Common myeloid progenitor, CD34-positive (primary cell): ENCODE measurements at regions of chr7 and their contacts with region 1.

Region 1: DNA sequence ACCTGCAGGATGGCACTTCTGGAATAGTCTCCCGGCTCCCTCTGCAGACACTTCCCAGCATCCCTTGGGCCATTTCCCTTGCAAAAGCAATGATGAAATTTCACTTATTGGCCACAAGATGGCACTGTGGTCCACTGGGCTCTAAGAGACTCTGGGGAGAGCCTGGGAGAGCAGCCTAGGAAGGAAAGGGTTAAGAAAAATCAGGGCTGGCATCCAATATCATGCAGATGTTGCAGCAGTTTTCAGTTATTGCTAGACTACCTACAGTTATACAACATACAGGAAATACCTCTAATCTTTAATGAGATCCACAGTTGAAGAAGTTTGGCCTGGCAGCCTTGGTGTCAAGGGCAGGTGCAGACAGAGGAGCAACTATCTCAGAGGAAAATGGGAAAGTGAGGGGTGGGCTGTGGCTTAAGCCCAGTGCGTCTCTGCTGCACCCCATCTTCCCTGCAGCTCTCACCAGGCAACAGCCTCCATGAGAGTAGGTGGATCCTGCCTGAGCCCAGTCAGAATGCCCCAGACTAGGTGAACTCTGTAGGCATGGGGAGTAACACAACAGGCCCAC is 100.2 kb upstream of the PRSS58 start:
- DNase-seq: peak; percentile 77 to 92 (median 92)
- H3K4me3 ChIP-seq: no peak overlapping the region
- H3K27ac ChIP-seq: no peak overlapping the region
- H3K4me1 ChIP-seq: peaks cover 5 to 36% (median 22%) of the 10 kb centered on the region in 4 experiments
- H3K27me3 ChIP-seq: no peaks in the 10 kb centered on the region

Region 2: GRCh38 chr7:142231716-142232115 is 126.3 kb before region 1 on chr7:
- CTCF ChIA-PET with region 1: no interaction called
- POLR2A ChIA-PET with region 1: no interaction called
- DNase-seq: peak; percentile 11 to 42 (median 36)
- H3K4me3 ChIP-seq: no peak overlapping the region
- H3K27ac ChIP-seq: no peak overlapping the region
- H3K4me1 ChIP-seq: no peaks in the 10 kb centered on the region
- H3K27me3 ChIP-seq: peaks cover 0 to 2% (median 0%) of the 10 kb centered on the region in 5 experiments

Region 3: GRCh38 chr7:142345811-142346210 is 12.2 kb before region 1 on chr7:
- CTCF ChIA-PET with region 1: interaction called, 45 read pairs
- POLR2A ChIA-PET with region 1: no interaction called
- DNase-seq: peak; percentile 50 to 86 (median 78)
- H3K4me3 ChIP-seq: peak overlapping the region in 2 of 7 experiments; percentile 3 to 27
- H3K27ac ChIP-seq: no peak overlapping the region
- H3K4me1 ChIP-seq: peaks cover 0 to 29% (median 21%) of the 10 kb centered on the region in 4 experiments
- H3K27me3 ChIP-seq: no peaks in the 10 kb centered on the region

Region 4: DNA sequence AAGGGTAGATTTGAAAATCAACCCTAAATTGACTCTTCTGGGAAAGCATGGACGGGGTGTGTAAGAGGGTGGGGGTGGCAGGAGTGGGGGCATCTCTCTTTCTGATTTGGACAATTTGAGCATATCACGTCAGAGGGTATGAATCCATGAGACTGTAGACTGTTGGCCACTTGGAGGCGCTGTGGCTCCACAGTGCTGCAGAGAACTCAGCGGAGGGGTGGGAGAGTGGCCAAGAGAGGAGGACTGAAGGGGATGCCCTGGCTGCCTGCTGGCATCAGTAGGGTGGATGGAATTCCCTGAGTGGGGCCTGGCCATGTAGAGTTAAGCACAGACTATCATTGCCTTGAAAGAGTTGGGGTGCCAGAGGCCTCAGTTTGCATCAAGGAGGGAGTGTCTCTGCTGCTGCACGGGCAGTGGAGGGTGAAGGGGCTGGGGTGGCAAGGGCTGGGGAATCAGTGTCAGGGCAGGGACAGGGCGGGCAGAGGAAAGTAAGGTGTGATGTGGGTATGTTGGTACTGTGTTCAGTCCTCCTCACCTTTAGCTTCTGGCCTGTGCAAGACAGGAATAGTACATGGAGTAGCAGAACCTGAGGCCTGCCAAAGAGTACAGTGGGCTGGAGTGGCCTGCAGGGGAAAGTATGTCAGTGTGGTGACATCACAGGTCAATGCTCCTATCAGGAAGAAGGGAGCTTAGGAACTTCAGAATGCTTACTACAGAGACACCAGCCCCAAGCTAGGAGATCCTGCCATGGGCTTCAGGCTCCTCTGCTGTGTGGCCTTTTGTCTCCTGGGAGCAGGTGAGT is 33.4 kb after region 1 on chr7:
- CTCF ChIA-PET with region 1: interaction called, 152 read pairs
- POLR2A ChIA-PET with region 1: no interaction called
- DNase-seq: peak; percentile 70 to 85 (median 77)
- H3K4me3 ChIP-seq: no peak overlapping the region
- H3K27ac ChIP-seq: no peak overlapping the region
- H3K4me1 ChIP-seq: peaks cover 0 to 16% (median 6%) of the 10 kb centered on the region in 4 experiments
- H3K27me3 ChIP-seq: no peaks in the 10 kb centered on the region

Region 5: GRCh38 chr7:142412551-142413193 is 54.6 kb after region 1 on chr7:
- CTCF ChIA-PET with region 1: interaction called, 12 read pairs
- POLR2A ChIA-PET with region 1: no interaction called
- DNase-seq: peak; percentile 80 to 87 (median 84)
- H3K4me3 ChIP-seq: no peak overlapping the region
- H3K27ac ChIP-seq: no peak overlapping the region
- H3K4me1 ChIP-seq: peaks cover 3 to 57% (median 45%) of the 10 kb centered on the region in 4 experiments
- H3K27me3 ChIP-seq: no peaks in the 10 kb centered on the region

Region 6: DNA sequence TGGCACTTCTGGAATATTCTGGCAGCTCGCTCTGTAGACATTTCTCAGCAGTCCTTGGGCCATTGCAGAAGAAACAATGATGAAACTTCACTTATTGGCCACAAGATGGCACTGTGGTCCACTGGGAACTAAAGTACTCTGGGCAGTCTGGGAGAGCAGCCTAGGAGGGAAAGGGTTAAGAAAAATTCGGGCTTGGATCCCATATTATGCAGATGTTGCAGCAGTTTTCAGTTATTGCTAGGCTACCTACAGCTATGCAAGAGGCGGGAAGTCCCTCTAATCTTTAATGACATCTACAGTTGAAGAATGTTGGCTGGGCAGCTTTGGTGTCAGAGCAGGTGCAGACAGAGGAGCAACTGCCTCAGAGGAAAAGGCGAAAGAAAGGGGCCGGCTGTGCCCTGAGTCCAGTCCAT is 101.5 kb after region 1 on chr7:
- CTCF ChIA-PET with region 1: interaction called, 10 read pairs
- POLR2A ChIA-PET with region 1: no interaction called
- DNase-seq: peak; percentile 83 to 89 (median 83)
- H3K4me3 ChIP-seq: peak overlapping the region in 1 of 7 experiments; percentile 36
- H3K27ac ChIP-seq: peak overlapping the region; percentile 27 to 31
- H3K4me1 ChIP-seq: peaks cover 9 to 80% (median 67%) of the 10 kb centered on the region in 4 experiments
- H3K27me3 ChIP-seq: no peaks in the 10 kb centered on the region

Region 7: GRCh38 chr7:142477079-142477651 is 119.1 kb after region 1 on chr7:
- CTCF ChIA-PET with region 1: no interaction called
- POLR2A ChIA-PET with region 1: no interaction called
- DNase-seq: peak in 2 of 3 donors; percentile 39 to 41
- H3K4me3 ChIP-seq: peak overlapping the region in 4 of 7 experiments; percentile 22 to 51 (median 38)
- H3K27ac ChIP-seq: peak overlapping the region; percentile 36 to 64
- H3K4me1 ChIP-seq: peaks cover 15 to 92% (median 68%) of the 10 kb centered on the region in 4 experiments
- H3K27me3 ChIP-seq: no peaks in the 10 kb centered on the region